Activated CD4-positive, alpha-beta memory T cell treated with anti-CD3 and anti-CD28 coated beads, Interleukin-2, amount 10 ng/mL, durations not matched to agents 7 days and 5 days (primary cell): ENCODE measurements at regions of chr16 and their contacts with region 1.

Region 1: DNA sequence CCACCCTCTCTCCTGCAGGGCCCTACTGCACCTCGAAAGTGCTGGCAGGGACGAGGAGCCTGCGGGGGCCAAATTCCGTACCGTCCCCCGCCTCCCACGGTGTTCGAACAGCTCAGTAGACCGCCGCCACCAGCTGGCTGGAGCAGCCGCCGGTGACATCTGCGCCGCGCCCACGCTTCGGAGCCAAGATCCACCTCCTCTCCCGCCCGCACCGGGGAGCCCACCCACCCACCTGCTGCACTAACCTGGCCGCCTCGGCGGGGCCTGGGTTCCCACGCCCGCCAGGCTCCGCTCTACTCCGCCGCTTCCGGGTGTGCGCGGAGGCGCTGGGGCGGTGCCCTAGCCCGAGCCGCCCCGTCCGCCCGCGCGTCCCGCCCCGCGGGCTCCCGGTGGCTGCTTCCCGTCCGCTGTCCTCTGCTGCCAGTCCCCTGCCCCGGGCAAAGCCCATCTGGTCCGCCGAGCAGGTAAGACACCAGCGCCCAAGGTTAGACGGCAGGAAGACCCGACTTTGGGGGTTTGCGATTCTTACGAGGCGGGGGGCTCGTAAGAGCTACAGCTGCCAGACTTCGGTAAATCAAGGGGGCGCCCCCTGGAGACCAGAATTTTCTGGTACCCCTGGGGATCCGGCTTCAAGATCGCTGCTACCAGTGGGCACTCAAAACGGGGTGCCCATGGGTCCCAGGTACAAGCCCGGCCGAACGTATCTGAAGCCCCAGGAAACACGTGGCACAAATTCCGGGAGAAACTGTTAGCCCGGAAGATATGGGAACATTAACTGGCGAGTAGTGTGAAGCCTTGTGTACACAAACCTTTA is at the starts of genes FBXL8 and TRADD:
- DNase-seq: peak; percentile 86
- H3K4me3 Mint-ChIP-seq: peak within 1 kb of the TSS; percentile 96
- H3K27ac Mint-ChIP-seq: peak within 1 kb of the TSS; percentile 98
- H3K4me1 Mint-ChIP-seq: peaks cover 65% of the 10 kb centered on the region
- H3K27me3 Mint-ChIP-seq: peaks cover 8% of the 10 kb centered on the region
- total RNA-seq, gene FBXL8: 52.3 to 54.4 TPM
- total RNA-seq, gene TRADD: 96.9 to 97.3 TPM

Region 2: GRCh38 chr16:66954097-66954659 is 205.6 kb before region 1 on chr16:
- CTCF ChIA-PET with region 1: interaction called, 20 read pairs
- POLR2A ChIA-PET with region 1: interaction called, 4 read pairs
- DNase-seq: peak; percentile 86
- H3K4me3 Mint-ChIP-seq: no peak overlapping the region
- H3K27ac Mint-ChIP-seq: no peak overlapping the region
- H3K4me1 Mint-ChIP-seq: peaks cover 43% of the 10 kb centered on the region
- H3K27me3 Mint-ChIP-seq: peaks cover 17% of the 10 kb centered on the region

Region 3: DNA sequence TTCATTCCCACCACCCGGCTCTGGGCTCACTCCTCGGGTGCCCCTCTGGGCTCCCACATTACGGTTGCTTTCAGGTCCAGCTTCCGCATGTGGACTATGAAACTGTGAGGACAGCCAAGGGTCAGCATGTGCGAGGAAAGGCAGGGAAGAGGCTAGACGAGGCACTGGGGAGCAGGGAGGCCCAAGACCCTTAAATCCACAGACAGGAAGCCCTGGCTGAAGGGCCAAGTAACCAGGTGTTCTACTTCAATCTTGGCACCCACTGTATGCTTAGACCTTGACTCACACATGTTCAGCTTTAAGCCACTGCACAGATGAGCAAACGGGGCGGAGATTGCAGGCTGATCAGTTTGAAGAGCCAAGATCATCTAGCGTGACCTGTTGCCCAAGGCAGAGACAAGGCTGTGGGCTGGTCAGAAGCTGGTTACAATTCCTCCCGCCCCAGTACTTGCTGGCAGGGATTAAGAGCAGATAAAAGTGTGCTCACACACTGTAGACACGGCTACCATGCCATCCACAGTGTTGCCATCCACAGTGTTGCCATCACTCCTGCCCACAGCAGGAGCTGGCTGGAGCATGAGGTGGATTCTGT is 171.5 kb before region 1 on chr16 and contains the start of gene CES4A:
- CTCF ChIA-PET with region 1: interaction called, 20 read pairs
- POLR2A ChIA-PET with region 1: interaction called, 59 read pairs
- DNase-seq: no peak
- H3K4me3 Mint-ChIP-seq: no peak within 1 kb of the TSS
- H3K27ac Mint-ChIP-seq: peak within 1 kb of the TSS; percentile 98
- H3K4me1 Mint-ChIP-seq: peaks cover 47% of the 10 kb centered on the region
- H3K27me3 Mint-ChIP-seq: no peaks in the 10 kb centered on the region
- total RNA-seq, gene CES4A: 37.8 to 39.3 TPM

Region 4: GRCh38 chr16:67104061-67104460 is 55.7 kb before region 1 on chr16:
- CTCF ChIA-PET with region 1: interaction called, 20 read pairs
- POLR2A ChIA-PET with region 1: interaction called, 3 read pairs
- DNase-seq: no peak
- H3K4me3 Mint-ChIP-seq: no peak overlapping the region
- H3K27ac Mint-ChIP-seq: peak overlapping the region; percentile 8
- H3K4me1 Mint-ChIP-seq: peaks cover 2% of the 10 kb centered on the region
- H3K27me3 Mint-ChIP-seq: no peaks in the 10 kb centered on the region

Region 5: GRCh38 chr16:67173808-67174705 is 14.3 kb after region 1 on chr16:
- CTCF ChIA-PET with region 1: interaction called, 16 read pairs
- POLR2A ChIA-PET with region 1: interaction called, 204 read pairs
- DNase-seq: peak; percentile 77
- H3K4me3 Mint-ChIP-seq: peak overlapping the region; percentile 78
- H3K27ac Mint-ChIP-seq: peak overlapping the region; percentile 52
- H3K4me1 Mint-ChIP-seq: peaks cover 63% of the 10 kb centered on the region
- H3K27me3 Mint-ChIP-seq: peaks cover 35% of the 10 kb centered on the region

Region 6: DNA sequence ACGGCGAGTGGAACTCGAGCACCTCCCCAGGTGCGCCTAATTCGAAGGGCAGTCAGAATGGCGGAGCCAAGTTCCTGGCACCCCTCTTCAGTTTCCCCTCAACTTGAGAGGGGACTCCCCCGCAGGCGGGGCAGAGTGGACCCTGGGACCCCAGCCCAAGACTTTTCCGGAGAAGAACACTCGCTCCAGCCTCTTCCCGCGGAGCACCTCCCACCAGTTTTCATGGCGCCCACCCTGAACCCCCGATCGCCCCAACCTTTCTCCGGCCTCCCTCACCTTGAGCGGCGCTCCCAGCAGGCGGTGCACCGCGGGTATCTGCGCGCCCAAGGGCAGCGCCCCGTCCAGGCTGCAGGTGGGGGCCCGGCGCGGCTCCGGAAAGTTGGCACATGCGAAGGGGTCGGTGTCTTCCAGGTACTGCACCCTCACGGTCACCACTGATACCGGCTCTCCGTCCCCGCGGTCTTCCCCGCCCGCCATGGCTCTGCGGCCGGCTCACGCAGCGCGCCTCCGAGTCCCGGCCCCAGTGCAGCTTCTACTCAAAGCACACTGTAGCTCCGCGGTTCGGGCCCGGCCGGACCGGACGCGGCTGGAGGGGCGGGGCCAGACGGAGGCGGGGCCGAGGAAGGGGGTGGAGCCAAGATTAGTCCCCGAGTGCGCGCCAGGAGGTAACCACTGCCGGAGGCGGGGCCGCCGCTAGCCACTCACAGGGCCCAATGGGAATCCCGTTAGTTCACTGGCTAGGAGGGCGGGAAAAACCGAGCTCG is 87.3 kb after region 1 on chr16 and contains the start of gene FHOD1:
- CTCF ChIA-PET with region 1: interaction called, 6 read pairs
- POLR2A ChIA-PET with region 1: interaction called, 11 read pairs
- DNase-seq: peak; percentile 99
- H3K4me3 Mint-ChIP-seq: peak within 1 kb of the TSS; percentile 85
- H3K27ac Mint-ChIP-seq: peak within 1 kb of the TSS; percentile 86
- H3K4me1 Mint-ChIP-seq: peaks cover 55% of the 10 kb centered on the region
- H3K27me3 Mint-ChIP-seq: peaks cover 17% of the 10 kb centered on the region
- total RNA-seq, gene FHOD1: 94.8 to 99.1 TPM